Heart right ventricle (tissue), 16 donors: ENCODE measurements at regions of chr18 and their contacts with region 1.

Region 1: DNA sequence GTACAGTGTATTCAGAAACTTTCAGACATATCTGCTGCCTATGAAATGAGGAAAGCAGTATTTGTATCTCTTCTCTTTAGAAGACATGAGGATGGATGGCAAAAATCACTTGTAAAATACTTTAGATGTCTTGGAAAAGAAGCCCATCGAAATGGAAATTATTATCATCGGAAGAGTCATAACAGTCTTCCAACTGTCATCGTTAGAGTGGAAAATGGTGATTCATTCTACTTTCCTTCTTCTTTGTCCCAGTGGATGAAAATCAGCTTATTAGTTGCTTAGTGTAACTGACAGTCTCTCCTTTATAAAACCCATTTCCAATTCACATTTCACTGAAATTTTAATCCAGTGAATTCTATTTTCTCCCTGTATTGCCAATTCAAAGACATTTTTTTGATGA is 1323.7 kb upstream of the PIK3C3 start:
- DNase-seq: no peak
- ATAC-seq: no peak
- H3K4me3 ChIP-seq: no peak overlapping the region
- H3K27ac ChIP-seq: no peak overlapping the region
- H3K4me1 ChIP-seq: no peaks in the 10 kb centered on the region
- H3K27me3 ChIP-seq: no peaks in the 10 kb centered on the region
- CTCF ChIP-seq: no peak

Region 2: GRCh38 chr18:40338284-40338683 is 293.0 kb before region 1 on chr18:
- intact Hi-C with region 1: no loop called
- DNase-seq: no peak
- ATAC-seq: no peak
- H3K4me3 ChIP-seq: no peak overlapping the region
- H3K27ac ChIP-seq: no peak overlapping the region
- H3K4me1 ChIP-seq: no peaks in the 10 kb centered on the region
- H3K27me3 ChIP-seq: no peaks in the 10 kb centered on the region
- CTCF ChIP-seq: no peak

Region 3: DNA sequence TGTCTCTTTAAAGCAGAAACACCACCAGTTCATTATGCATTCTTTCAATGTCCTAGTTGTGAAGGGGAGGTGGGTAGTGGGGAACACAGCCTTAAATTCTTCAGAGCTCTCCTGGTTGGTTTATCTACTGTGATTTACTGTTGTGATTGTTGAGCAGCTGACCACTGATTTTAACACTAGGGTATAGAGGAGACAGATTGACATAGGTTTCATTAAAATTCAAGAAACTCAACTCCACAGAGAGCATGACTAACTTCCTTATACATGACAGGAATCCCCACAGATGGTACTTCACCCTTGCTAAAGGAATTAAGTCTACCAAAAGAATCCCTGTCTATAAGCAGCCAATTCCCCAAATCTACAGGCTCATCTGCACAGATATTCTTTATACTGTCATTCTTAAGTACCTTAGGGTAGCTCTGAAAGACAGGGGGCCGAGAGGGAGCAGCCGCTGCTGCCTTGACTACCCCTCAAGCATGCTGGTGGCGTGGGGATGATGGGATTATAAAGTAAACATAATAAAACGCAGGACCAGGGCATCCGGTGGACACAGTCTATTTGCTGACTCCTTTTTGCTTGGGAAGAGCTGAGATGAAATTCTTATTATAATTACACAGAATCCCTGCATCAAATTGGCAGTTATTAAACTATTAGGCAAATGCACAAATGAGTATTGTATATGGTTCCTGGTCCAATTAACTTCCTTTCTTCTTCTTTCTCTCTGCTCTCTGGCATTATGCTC is 53.9 kb before region 1 on chr18:
- intact Hi-C with region 1: loop called in 1 of 10 experiments (anchors 10 kb)
- DNase-seq: no peak
- ATAC-seq: no peak
- H3K4me3 ChIP-seq: no peak overlapping the region
- H3K27ac ChIP-seq: no peak overlapping the region
- H3K4me1 ChIP-seq: no peaks in the 10 kb centered on the region
- H3K27me3 ChIP-seq: no peaks in the 10 kb centered on the region
- CTCF ChIP-seq: no peak

Region 4: DNA sequence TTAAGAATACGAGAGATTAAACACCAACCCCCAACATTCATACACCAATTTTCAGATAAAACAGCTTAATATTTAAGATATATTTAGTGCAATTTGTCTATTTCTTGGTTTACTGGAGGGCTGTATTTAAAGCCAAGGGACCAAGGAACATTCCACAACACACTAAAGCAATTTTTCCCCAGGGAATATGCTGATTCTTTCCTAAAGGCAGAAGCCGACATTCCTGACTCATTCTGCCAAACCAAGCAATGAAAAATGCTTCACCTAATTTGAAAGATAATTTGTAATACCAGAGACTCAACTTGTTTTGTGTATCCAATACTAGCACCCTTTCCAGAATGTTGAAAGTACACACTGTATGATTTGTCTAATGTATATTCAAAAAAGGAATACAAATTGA is 56.1 kb after region 1 on chr18:
- intact Hi-C with region 1: loop called in 1 of 10 experiments (anchors 10 kb)
- DNase-seq: no peak
- ATAC-seq: no peak
- H3K4me3 ChIP-seq: no peak overlapping the region
- H3K27ac ChIP-seq: no peak overlapping the region
- H3K4me1 ChIP-seq: no peaks in the 10 kb centered on the region
- H3K27me3 ChIP-seq: no peaks in the 10 kb centered on the region
- CTCF ChIP-seq: no peak

Region 5: GRCh38 chr18:40707797-40708196 is 76.5 kb after region 1 on chr18:
- intact Hi-C with region 1: no loop called
- DNase-seq: no peak
- ATAC-seq: no peak
- H3K4me3 ChIP-seq: no peak overlapping the region
- H3K27ac ChIP-seq: no peak overlapping the region
- H3K4me1 ChIP-seq: no peaks in the 10 kb centered on the region
- H3K27me3 ChIP-seq: no peaks in the 10 kb centered on the region
- CTCF ChIP-seq: no peak

Region 6: GRCh38 chr18:40984856-40985255 is 353.5 kb after region 1 on chr18:
- intact Hi-C with region 1: no loop called
- DNase-seq: no peak
- ATAC-seq: no peak
- H3K4me3 ChIP-seq: no peak overlapping the region
- H3K27ac ChIP-seq: no peak overlapping the region
- H3K4me1 ChIP-seq: no peaks in the 10 kb centered on the region
- H3K27me3 ChIP-seq: no peaks in the 10 kb centered on the region
- CTCF ChIP-seq: no peak